Right cardiac atrium (tissue), 5 donors: ENCODE measurements at regions of chr10 and their contacts with region 1.

Region 1: DNA sequence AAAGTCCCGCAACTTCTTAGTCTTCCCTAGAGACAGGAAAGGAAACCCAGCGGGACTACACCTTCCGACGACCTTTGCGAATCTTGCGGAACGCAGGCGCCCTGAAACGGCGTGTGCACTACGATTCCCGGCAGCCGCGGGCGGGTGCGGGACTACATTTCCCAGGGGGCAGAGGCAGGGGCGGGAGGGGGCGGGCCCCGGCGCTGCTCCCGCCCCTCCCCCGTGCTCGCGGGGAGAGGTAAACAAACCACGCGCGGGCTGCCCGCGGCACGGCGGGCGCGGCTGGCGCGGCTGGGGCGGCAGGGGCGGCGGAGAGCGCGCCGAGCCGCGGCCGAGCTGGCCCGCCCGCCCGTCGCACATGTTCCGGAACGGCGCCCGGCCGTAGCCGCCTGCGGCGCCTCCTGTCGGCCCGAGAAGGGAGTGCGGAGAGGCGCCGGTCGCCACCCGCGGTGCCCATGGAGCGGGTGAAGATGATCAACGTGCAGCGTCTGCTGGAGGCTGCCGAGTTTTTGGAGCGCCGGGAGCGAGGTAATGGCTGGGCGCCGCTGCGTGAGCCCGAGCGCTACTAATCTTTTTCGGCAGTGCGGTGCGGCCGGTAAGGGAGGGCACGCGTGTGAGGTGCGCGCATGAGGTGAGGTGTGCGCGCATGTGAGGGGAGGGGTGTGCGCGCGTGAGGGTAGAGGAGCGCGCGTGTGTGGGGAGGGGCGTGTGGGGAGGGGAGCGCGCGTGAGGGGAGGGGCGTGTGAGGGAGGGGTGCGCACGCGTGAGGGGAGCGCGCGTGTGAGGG is 18.5 kb downstream of the MXI1 start:
- DNase-seq: peak; percentile 92 to 97 (median 96)
- ATAC-seq: peak; percentile 74 to 75
- H3K4me3 ChIP-seq: peak overlapping the region; percentile 70
- H3K27ac ChIP-seq: peak overlapping the region; percentile 95
- H3K4me1 ChIP-seq: peaks cover 5% of the 10 kb centered on the region
- H3K27me3 ChIP-seq: no peaks in the 10 kb centered on the region

Region 2: GRCh38 chr10:110273474-110273873 is 47.5 kb after region 1 on chr10:
- intact Hi-C with region 1: loop called in 3 of 4 experiments (anchors 5 to 10 kb)
- DNase-seq: peak; percentile 73 to 87 (median 75)
- ATAC-seq: peak; percentile 64 to 66
- H3K4me3 ChIP-seq: no peak overlapping the region
- H3K27ac ChIP-seq: peak overlapping the region; percentile 90
- H3K4me1 ChIP-seq: peaks cover 8% of the 10 kb centered on the region
- H3K27me3 ChIP-seq: no peaks in the 10 kb centered on the region

Region 3: GRCh38 chr10:110279407-110279986 is 53.5 kb after region 1 on chr10:
- intact Hi-C with region 1: loop called in 3 of 4 experiments (anchors 5 to 10 kb)
- DNase-seq: peak in 2 of 3 donors; percentile 26 to 29
- ATAC-seq: peak; percentile 86 to 87
- H3K4me3 ChIP-seq: no peak overlapping the region
- H3K27ac ChIP-seq: no peak overlapping the region
- H3K4me1 ChIP-seq: peaks cover 1% of the 10 kb centered on the region
- H3K27me3 ChIP-seq: no peaks in the 10 kb centered on the region

Region 4: DNA sequence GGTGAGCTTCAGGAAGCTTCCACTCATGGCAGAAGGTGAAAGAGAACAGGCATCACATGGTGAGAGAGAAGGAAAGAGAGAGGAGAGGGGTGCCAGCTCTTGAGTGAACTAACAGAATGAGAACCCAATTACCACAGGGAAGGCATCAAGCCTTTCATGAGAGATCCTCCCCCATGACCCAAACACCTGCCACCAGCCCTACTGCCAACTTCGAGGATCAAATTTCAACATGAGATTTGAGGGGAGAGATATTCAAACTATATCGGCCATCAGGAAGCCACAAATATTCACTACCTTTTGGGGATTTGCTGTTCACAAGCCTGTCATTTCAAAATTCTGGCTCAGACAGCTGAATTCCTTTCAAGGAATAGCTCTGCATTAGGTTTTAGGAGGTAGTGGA is 118.7 kb after region 1 on chr10:
- intact Hi-C with region 1: no loop called
- DNase-seq: no peak
- ATAC-seq: no peak
- H3K4me3 ChIP-seq: no peak overlapping the region
- H3K27ac ChIP-seq: no peak overlapping the region
- H3K4me1 ChIP-seq: no peaks in the 10 kb centered on the region
- H3K27me3 ChIP-seq: no peaks in the 10 kb centered on the region